Mammary epithelial cell (primary cell): ENCODE measurements at regions of chr6 and their contacts with region 1.

Region 1: GRCh38 chr6:106444777-106445507 is 84.4 kb downstream of the CRYBG1 start:
- DNase-seq: peak; percentile 58
- H3K4me3 ChIP-seq: no peak overlapping the region
- H3K27ac ChIP-seq: no peak overlapping the region
- H3K4me1 ChIP-seq: peaks cover 31% of the 10 kb centered on the region
- H3K27me3 ChIP-seq: no peaks in the 10 kb centered on the region
- CTCF ChIP-seq: peak; percentile 71 to 74

Region 2: GRCh38 chr6:106339334-106340029 is 105.5 kb before region 1 on chr6:
- CTCF ChIA-PET with region 1: no interaction called
- dilution Hi-C with region 1: no loop called
- in situ Hi-C with region 1: no loop called
- intact Hi-C with region 1: loop called (anchors 1 kb)
- DNase-seq: peak; percentile 86
- H3K4me3 ChIP-seq: no peak overlapping the region
- H3K27ac ChIP-seq: peak overlapping the region; percentile 13
- H3K4me1 ChIP-seq: peaks cover 13% of the 10 kb centered on the region
- H3K27me3 ChIP-seq: no peaks in the 10 kb centered on the region
- CTCF ChIP-seq: peak; percentile 82 to 91

Region 3: GRCh38 chr6:106372838-106373501 is 72.0 kb before region 1 on chr6:
- CTCF ChIA-PET with region 1: no interaction called
- dilution Hi-C with region 1: loop called (anchors 5 kb)
- in situ Hi-C with region 1: no loop called
- intact Hi-C with region 1: no loop called
- DNase-seq: peak; percentile 86
- H3K4me3 ChIP-seq: no peak overlapping the region
- H3K27ac ChIP-seq: peak overlapping the region; percentile 86
- H3K4me1 ChIP-seq: peaks cover 78% of the 10 kb centered on the region
- H3K27me3 ChIP-seq: no peaks in the 10 kb centered on the region
- CTCF ChIP-seq: no peak

Region 4: DNA sequence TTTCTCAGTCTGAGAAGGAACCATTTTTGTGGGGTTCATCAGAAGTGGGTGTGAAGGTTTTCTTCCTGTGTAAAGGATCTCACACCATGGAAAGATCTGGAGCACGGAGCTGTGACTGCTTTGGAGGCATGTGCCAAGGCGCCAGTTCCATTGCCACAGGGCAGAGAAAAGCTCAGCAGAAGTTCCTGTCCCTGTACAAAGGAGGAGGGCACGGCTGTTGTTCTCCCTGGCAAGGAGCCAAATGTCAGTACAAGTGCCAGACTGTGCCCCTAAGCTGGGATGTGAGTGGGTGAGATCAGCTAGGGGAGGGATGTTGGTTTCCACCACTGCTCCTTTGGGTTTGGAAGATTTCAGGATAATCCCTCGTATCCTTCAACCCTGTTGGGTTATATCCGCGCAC is 32.8 kb after region 1 on chr6:
- CTCF ChIA-PET with region 1: no interaction called
- dilution Hi-C with region 1: no loop called
- in situ Hi-C with region 1: no loop called
- intact Hi-C with region 1: no loop called
- DNase-seq: no peak
- H3K4me3 ChIP-seq: no peak overlapping the region
- H3K27ac ChIP-seq: no peak overlapping the region
- H3K4me1 ChIP-seq: peaks cover 46% of the 10 kb centered on the region
- H3K27me3 ChIP-seq: no peaks in the 10 kb centered on the region
- CTCF ChIP-seq: no peak

Region 5: GRCh38 chr6:106556368-106556960 is 111.5 kb after region 1 on chr6:
- CTCF ChIA-PET with region 1: no interaction called
- dilution Hi-C with region 1: loop called (anchors 5 kb)
- in situ Hi-C with region 1: no loop called
- intact Hi-C with region 1: loop called (anchors 2 kb)
- DNase-seq: no peak
- H3K4me3 ChIP-seq: no peak overlapping the region
- H3K27ac ChIP-seq: no peak overlapping the region
- H3K4me1 ChIP-seq: peaks cover 26% of the 10 kb centered on the region
- H3K27me3 ChIP-seq: no peaks in the 10 kb centered on the region
- CTCF ChIP-seq: peak in 1 of 2 donors; percentile 47

Region 6: GRCh38 chr6:106608062-106608668 is 163.2 kb after region 1 on chr6:
- CTCF ChIA-PET with region 1: no interaction called
- dilution Hi-C with region 1: no loop called
- in situ Hi-C with region 1: no loop called
- intact Hi-C with region 1: loop called (anchors 1 kb)
- DNase-seq: peak; percentile 66
- H3K4me3 ChIP-seq: no peak overlapping the region
- H3K27ac ChIP-seq: no peak overlapping the region
- H3K4me1 ChIP-seq: no peaks in the 10 kb centered on the region
- H3K27me3 ChIP-seq: no peaks in the 10 kb centered on the region
- CTCF ChIP-seq: peak; percentile 64 to 77

Region 7: DNA sequence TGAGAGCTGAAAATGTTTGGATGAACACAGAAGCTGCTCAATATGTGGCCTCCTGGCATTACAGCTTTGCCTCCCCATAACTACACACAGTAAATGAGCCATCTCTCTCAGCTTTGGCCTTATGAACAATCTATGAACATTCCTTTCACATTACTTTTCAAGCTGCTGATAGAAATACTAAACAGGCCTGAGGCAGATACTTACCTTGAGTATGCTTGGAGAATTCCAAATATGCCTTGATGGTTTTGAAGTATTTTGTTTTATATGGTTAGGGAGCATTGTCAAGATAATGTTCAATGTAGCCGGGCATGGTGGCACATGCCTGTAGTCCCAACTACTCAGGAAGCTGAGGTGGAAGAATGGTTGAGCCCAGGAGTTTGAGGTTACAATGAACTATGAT is 425.1 kb after region 1 on chr6:
- CTCF ChIA-PET with region 1: no interaction called
- dilution Hi-C with region 1: no loop called
- in situ Hi-C with region 1: no loop called
- intact Hi-C with region 1: loop called (anchors 5 kb)
- DNase-seq: peak; percentile 96
- H3K4me3 ChIP-seq: no peak overlapping the region
- H3K27ac ChIP-seq: peak overlapping the region; percentile 88
- H3K4me1 ChIP-seq: peaks cover 41% of the 10 kb centered on the region
- H3K27me3 ChIP-seq: no peaks in the 10 kb centered on the region
- CTCF ChIP-seq: no peak

Region 8: GRCh38 chr6:107318100-107318736 is 873.3 kb after region 1 on chr6:
- CTCF ChIA-PET with region 1: no interaction called
- dilution Hi-C with region 1: no loop called
- in situ Hi-C with region 1: no loop called
- intact Hi-C with region 1: no loop called
- DNase-seq: peak; percentile 19
- H3K4me3 ChIP-seq: no peak overlapping the region
- H3K27ac ChIP-seq: no peak overlapping the region
- H3K4me1 ChIP-seq: peaks cover 1% of the 10 kb centered on the region
- H3K27me3 ChIP-seq: no peaks in the 10 kb centered on the region
- CTCF ChIP-seq: peak; percentile 67 to 85